GM12878 (cell line): ENCODE measurements at regions of chr4 and their contacts with region 1.

Region 1: GRCh38 chr4:85842540-85842939 is 367.6 kb downstream of the ARHGAP24 start:
- DNase-seq: no peak
- ATAC-seq: no peak
- H3K4me3 ChIP-seq: no peak overlapping the region
- H3K27ac ChIP-seq: no peak overlapping the region
- H3K4me1 ChIP-seq: no peaks in the 10 kb centered on the region
- H3K27me3 ChIP-seq: no peaks in the 10 kb centered on the region
- CTCF ChIP-seq: no peak
- EP300 ChIP-seq: no peak
- POLR2A ChIP-seq: no peak
- RAD21 ChIP-seq: no peak

Region 2: GRCh38 chr4:85821688-85822455 is 20.7 kb before region 1 on chr4:
- CTCF ChIA-PET with region 1: no interaction called
- POLR2A ChIA-PET with region 1: no interaction called
- RAD21 ChIA-PET with region 1: no interaction called
- SMC1A ChIA-PET with region 1: no interaction called
- in situ Hi-C with region 1: no loop called
- intact Hi-C with region 1: loop called (anchors 1 kb)
- DNase-seq: no peak
- ATAC-seq: no peak
- H3K4me3 ChIP-seq: no peak overlapping the region
- H3K27ac ChIP-seq: no peak overlapping the region
- H3K4me1 ChIP-seq: no peaks in the 10 kb centered on the region
- H3K27me3 ChIP-seq: no peaks in the 10 kb centered on the region
- CTCF ChIP-seq: no peak
- EP300 ChIP-seq: no peak
- POLR2A ChIP-seq: no peak
- RAD21 ChIP-seq: no peak

Region 3: GRCh38 chr4:85968945-85969819 is 126.6 kb after region 1 on chr4:
- CTCF ChIA-PET with region 1: no interaction called
- POLR2A ChIA-PET with region 1: no interaction called
- RAD21 ChIA-PET with region 1: no interaction called
- SMC1A ChIA-PET with region 1: no interaction called
- in situ Hi-C with region 1: no loop called
- intact Hi-C with region 1: no loop called
- DNase-seq: no peak
- ATAC-seq: peak; percentile 78
- H3K4me3 ChIP-seq: no peak overlapping the region
- H3K27ac ChIP-seq: no peak overlapping the region
- H3K4me1 ChIP-seq: no peaks in the 10 kb centered on the region
- H3K27me3 ChIP-seq: no peaks in the 10 kb centered on the region
- CTCF ChIP-seq: peak; percentile 40 to 59 (median 51); a peak in 5 of 6 replicates
- EP300 ChIP-seq: no peak
- POLR2A ChIP-seq: no peak
- RAD21 ChIP-seq: peak; percentile 68